CD8-positive, alpha-beta T cell (primary cell): ENCODE measurements at regions of chr2 and their contacts with region 1.

Region 1: GRCh38 chr2:42102024-42102590 is 54.3 kb downstream of the PKDCC start:
- DNase-seq: peak; percentile 84 to 98 (median 92)
- ATAC-seq: peak; percentile 74
- H3K4me3 ChIP-seq: peak overlapping the region; percentile 49 to 53
- H3K4me3 Mint-ChIP-seq: peak overlapping the region; percentile 85
- H3K27ac ChIP-seq: peak overlapping the region; percentile 88 to 97
- H3K27ac Mint-ChIP-seq: no peak overlapping the region
- H3K4me1 ChIP-seq: peaks cover 90% of the 10 kb centered on the region
- H3K4me1 Mint-ChIP-seq: peaks cover 46% of the 10 kb centered on the region
- H3K27me3 ChIP-seq: no peaks in the 10 kb centered on the region
- H3K27me3 Mint-ChIP-seq: no peaks in the 10 kb centered on the region
- CTCF ChIP-seq: no peak

Region 2: GRCh38 chr2:42063431-42064171 is 38.5 kb before region 1 on chr2:
- CTCF ChIA-PET with region 1: no interaction called
- POLR2A ChIA-PET with region 1: no interaction called
- intact Hi-C with region 1: no loop called
- DNase-seq: no peak
- ATAC-seq: no peak
- H3K4me3 ChIP-seq: no peak overlapping the region
- H3K4me3 Mint-ChIP-seq: no peak overlapping the region
- H3K27ac ChIP-seq: no peak overlapping the region
- H3K27ac Mint-ChIP-seq: no peak overlapping the region
- H3K4me1 ChIP-seq: no peaks in the 10 kb centered on the region
- H3K4me1 Mint-ChIP-seq: no peaks in the 10 kb centered on the region
- H3K27me3 ChIP-seq: no peaks in the 10 kb centered on the region
- H3K27me3 Mint-ChIP-seq: peaks cover 12% of the 10 kb centered on the region
- CTCF ChIP-seq: no peak

Region 3: DNA sequence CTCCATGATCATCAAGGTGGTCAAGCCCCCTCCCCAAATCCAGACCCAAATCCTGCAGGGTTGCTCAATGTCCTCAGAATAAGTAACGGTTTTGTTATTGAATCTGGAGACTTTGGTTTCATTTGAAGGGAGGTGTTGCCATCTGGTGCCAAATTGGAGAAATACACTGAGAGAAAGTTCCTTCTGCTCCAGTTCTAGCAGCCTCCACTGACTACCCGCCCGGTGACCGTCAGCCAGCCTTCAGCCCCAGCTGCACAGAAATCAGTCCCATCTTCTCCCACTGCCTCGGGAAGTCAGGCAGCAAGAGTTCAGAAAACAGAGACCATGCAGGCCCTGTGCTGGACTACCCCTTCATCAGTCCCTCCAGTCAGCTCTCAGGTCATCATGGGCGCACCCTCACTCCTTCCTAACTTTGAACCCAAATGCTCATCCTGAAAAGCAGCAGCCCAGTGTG is 15.6 kb before region 1 on chr2:
- CTCF ChIA-PET with region 1: interaction called, 12 read pairs
- POLR2A ChIA-PET with region 1: interaction called, 3 read pairs
- intact Hi-C with region 1: no loop called
- DNase-seq: peak in 4 of 9 experiments; percentile 27 to 74 (median 48)
- ATAC-seq: peak; percentile 78
- H3K4me3 ChIP-seq: no peak overlapping the region
- H3K4me3 Mint-ChIP-seq: no peak overlapping the region
- H3K27ac ChIP-seq: no peak overlapping the region
- H3K27ac Mint-ChIP-seq: no peak overlapping the region
- H3K4me1 ChIP-seq: no peaks in the 10 kb centered on the region
- H3K4me1 Mint-ChIP-seq: peaks cover 8% of the 10 kb centered on the region
- H3K27me3 ChIP-seq: no peaks in the 10 kb centered on the region
- H3K27me3 Mint-ChIP-seq: peaks cover 3% of the 10 kb centered on the region
- CTCF ChIP-seq: peak; percentile 62

Region 4: GRCh38 chr2:42117923-42118753 is 16.0 kb after region 1 on chr2:
- CTCF ChIA-PET with region 1: interaction called, 4 read pairs
- POLR2A ChIA-PET with region 1: interaction called, 92 read pairs
- intact Hi-C with region 1: loop called in 1 of 2 experiments (anchors 1 kb)
- DNase-seq: peak in 1 of 9 experiments; percentile 44
- ATAC-seq: peak; percentile 64
- H3K4me3 ChIP-seq: no peak overlapping the region
- H3K4me3 Mint-ChIP-seq: no peak overlapping the region
- H3K27ac ChIP-seq: peak overlapping the region in 1 of 2 experiments; percentile 24
- H3K27ac Mint-ChIP-seq: peak overlapping the region; percentile 82
- H3K4me1 ChIP-seq: peaks cover 22% of the 10 kb centered on the region
- H3K4me1 Mint-ChIP-seq: peaks cover 48% of the 10 kb centered on the region
- H3K27me3 ChIP-seq: no peaks in the 10 kb centered on the region
- H3K27me3 Mint-ChIP-seq: no peaks in the 10 kb centered on the region
- CTCF ChIP-seq: no peak

Region 5: DNA sequence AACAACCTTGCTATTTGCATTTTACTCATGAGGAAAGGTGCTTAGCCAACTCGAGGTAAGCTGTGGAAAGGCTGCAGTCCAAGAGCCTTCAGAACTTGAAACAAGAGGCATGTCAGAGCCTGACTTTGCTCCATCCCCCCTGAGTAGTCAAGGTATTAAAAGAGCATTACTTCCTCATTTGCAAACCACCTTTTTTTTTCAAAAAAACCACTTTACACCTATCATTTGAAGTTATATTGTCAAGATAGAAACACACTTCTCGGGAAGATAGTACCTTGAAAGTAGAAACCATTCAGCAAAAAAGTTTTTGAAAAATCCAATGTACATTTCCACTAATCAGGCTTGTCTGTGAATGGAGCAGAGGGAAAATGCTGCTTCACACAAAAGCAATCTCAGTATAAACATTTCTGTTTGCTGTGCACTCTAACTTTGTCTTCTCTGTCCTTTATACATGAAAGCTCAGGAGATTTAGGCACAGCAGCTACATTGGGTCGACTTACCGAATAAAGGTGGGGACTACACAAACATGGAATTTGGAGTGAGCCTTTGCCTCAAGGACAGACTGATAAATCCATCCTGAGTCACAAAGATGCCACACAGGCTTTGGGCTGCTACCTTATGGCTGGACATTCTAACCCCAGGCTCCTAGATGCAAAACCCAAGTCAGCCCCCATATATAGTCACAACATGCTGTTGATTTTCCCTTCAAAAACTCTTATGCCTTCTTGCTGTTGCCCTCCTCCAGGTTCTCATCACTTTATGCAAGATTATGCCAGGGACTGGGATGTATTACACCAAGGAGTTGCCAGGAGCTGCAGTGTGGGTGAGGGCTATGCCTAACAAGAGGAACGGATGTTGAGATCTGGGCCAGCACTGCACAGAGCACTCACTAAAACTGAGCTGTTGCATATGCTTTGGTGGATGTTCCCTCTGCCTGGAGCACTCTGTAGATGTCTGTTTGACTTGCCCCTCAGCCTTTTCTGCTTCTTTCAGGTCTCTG is 25.6 kb after region 1 on chr2:
- CTCF ChIA-PET with region 1: interaction called, 52 read pairs
- POLR2A ChIA-PET with region 1: interaction called, 92 read pairs
- intact Hi-C with region 1: loop called (anchors 1 kb)
- DNase-seq: peak in 7 of 9 experiments; percentile 21 to 78 (median 51)
- ATAC-seq: peak; percentile 39
- H3K4me3 ChIP-seq: peak overlapping the region in 1 of 2 experiments; percentile 12
- H3K4me3 Mint-ChIP-seq: peak overlapping the region; percentile 76
- H3K27ac ChIP-seq: peak overlapping the region; percentile 20 to 79
- H3K27ac Mint-ChIP-seq: peak overlapping the region; percentile 95
- H3K4me1 ChIP-seq: peaks cover 95% of the 10 kb centered on the region
- H3K4me1 Mint-ChIP-seq: peaks cover 88% of the 10 kb centered on the region
- H3K27me3 ChIP-seq: no peaks in the 10 kb centered on the region
- H3K27me3 Mint-ChIP-seq: no peaks in the 10 kb centered on the region
- CTCF ChIP-seq: no peak

Region 6: GRCh38 chr2:42132966-42133641 is 31.0 kb after region 1 on chr2:
- CTCF ChIA-PET with region 1: interaction called, 52 read pairs
- POLR2A ChIA-PET with region 1: interaction called, 92 read pairs
- intact Hi-C with region 1: loop called (anchors 1 kb)
- DNase-seq: peak; percentile 83 to 97 (median 90)
- ATAC-seq: peak; percentile 88
- H3K4me3 ChIP-seq: peak overlapping the region; percentile 6 to 22
- H3K4me3 Mint-ChIP-seq: peak overlapping the region; percentile 76
- H3K27ac ChIP-seq: peak overlapping the region; percentile 61 to 90
- H3K27ac Mint-ChIP-seq: peak overlapping the region; percentile 98
- H3K4me1 ChIP-seq: peaks cover 80% of the 10 kb centered on the region
- H3K4me1 Mint-ChIP-seq: peaks cover 85% of the 10 kb centered on the region
- H3K27me3 ChIP-seq: no peaks in the 10 kb centered on the region
- H3K27me3 Mint-ChIP-seq: no peaks in the 10 kb centered on the region
- CTCF ChIP-seq: no peak

Region 7: GRCh38 chr2:42141687-42142546 is 39.8 kb after region 1 on chr2:
- CTCF ChIA-PET with region 1: interaction called, 52 read pairs
- POLR2A ChIA-PET with region 1: interaction called, 14 read pairs
- intact Hi-C with region 1: no loop called
- DNase-seq: peak in 2 of 9 experiments; percentile 24 to 33
- ATAC-seq: peak; percentile 44
- H3K4me3 ChIP-seq: no peak overlapping the region
- H3K4me3 Mint-ChIP-seq: peak overlapping the region; percentile 37
- H3K27ac ChIP-seq: no peak overlapping the region
- H3K27ac Mint-ChIP-seq: peak overlapping the region; percentile 27
- H3K4me1 ChIP-seq: peaks cover 31% of the 10 kb centered on the region
- H3K4me1 Mint-ChIP-seq: peaks cover 46% of the 10 kb centered on the region
- H3K27me3 ChIP-seq: no peaks in the 10 kb centered on the region
- H3K27me3 Mint-ChIP-seq: no peaks in the 10 kb centered on the region
- CTCF ChIP-seq: no peak

Region 8: DNA sequence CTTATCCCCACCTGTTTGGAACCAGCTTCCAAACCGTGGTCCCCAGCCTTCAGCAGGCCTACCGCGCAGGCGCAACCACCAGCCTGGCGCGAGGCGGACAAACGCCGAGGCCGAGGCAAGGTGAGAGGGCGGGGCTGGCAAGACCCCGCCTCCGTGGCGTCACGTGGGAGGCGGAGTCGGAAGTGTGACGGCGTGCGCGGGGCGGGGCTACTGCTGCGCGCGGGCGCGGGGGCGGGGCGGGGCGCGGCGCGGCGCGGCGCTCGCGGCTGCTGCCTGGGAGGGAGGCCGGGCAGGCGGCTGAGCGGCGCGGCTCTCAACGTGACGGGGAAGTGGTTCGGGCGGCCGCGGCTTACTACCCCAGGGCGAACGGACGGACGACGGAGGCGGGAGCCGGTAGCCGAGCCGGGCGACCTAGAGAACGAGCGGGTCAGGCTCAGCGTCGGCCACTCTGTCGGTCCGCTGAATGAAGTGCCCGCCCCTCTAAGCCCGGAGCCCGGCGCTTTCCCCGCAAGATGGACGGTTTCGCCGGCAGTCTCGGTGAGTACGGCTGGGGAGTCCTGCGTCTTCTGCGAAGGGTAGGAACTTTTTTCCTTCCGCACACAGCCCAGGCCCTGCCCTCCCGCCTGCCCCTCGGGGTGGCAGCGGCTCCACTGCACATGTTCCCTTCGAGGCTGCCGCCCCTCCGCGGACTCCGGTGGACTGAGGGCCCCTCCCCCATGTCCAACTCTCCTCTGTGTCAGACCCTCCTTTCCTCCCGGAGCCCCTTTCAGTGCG is 67.2 kb after region 1 on chr2 and contains the start of gene EML4:
- CTCF ChIA-PET with region 1: interaction called, 12 read pairs
- POLR2A ChIA-PET with region 1: interaction called, 47 read pairs
- intact Hi-C with region 1: loop called (anchors 1 to 2 kb)
- DNase-seq: peak; percentile 81 to 97 (median 90)
- ATAC-seq: peak; percentile 88
- H3K4me3 ChIP-seq: peak within 1 kb of the TSS; percentile 72 to 86
- H3K4me3 Mint-ChIP-seq: no peak within 1 kb of the TSS
- H3K27ac ChIP-seq: peak within 1 kb of the TSS; percentile 77 to 92
- H3K27ac Mint-ChIP-seq: no peak within 1 kb of the TSS
- H3K4me1 ChIP-seq: peaks cover 45% of the 10 kb centered on the region
- H3K4me1 Mint-ChIP-seq: peaks cover 26% of the 10 kb centered on the region
- H3K27me3 ChIP-seq: no peaks in the 10 kb centered on the region
- H3K27me3 Mint-ChIP-seq: no peaks in the 10 kb centered on the region
- CTCF ChIP-seq: no peak
- total RNA-seq, gene EML4: 224 to 240 TPM